Panc1 (cell line): ENCODE measurements at regions of chr10 and their contacts with region 1.

Region 1: GRCh38 chr10:3573498-3573897 is 211.5 kb downstream of the KLF6 start:
- DNase-seq: no peak
- ATAC-seq: no peak
- H3K4me3 ChIP-seq: no peak overlapping the region
- H3K27ac ChIP-seq: no peak overlapping the region
- H3K4me1 ChIP-seq: no peaks in the 10 kb centered on the region
- H3K27me3 ChIP-seq: no peaks in the 10 kb centered on the region
- CTCF ChIP-seq: no peak

Region 2: GRCh38 chr10:3835770-3836169 is 262.3 kb after region 1 on chr10:
- CTCF ChIA-PET with region 1: no interaction called
- POLR2A ChIA-PET with region 1: interaction called, 12 read pairs
- in situ Hi-C with region 1: no loop called
- intact Hi-C with region 1: no loop called
- DNase-seq: no peak
- ATAC-seq: peak; percentile 69
- H3K4me3 ChIP-seq: no peak overlapping the region
- H3K27ac ChIP-seq: peak overlapping the region; percentile 99
- H3K4me1 ChIP-seq: peaks cover 50% of the 10 kb centered on the region
- H3K27me3 ChIP-seq: no peaks in the 10 kb centered on the region
- CTCF ChIP-seq: no peak